ENCODE measurements at regions of chr16 and their contacts with region 1.

Region 1: DNA sequence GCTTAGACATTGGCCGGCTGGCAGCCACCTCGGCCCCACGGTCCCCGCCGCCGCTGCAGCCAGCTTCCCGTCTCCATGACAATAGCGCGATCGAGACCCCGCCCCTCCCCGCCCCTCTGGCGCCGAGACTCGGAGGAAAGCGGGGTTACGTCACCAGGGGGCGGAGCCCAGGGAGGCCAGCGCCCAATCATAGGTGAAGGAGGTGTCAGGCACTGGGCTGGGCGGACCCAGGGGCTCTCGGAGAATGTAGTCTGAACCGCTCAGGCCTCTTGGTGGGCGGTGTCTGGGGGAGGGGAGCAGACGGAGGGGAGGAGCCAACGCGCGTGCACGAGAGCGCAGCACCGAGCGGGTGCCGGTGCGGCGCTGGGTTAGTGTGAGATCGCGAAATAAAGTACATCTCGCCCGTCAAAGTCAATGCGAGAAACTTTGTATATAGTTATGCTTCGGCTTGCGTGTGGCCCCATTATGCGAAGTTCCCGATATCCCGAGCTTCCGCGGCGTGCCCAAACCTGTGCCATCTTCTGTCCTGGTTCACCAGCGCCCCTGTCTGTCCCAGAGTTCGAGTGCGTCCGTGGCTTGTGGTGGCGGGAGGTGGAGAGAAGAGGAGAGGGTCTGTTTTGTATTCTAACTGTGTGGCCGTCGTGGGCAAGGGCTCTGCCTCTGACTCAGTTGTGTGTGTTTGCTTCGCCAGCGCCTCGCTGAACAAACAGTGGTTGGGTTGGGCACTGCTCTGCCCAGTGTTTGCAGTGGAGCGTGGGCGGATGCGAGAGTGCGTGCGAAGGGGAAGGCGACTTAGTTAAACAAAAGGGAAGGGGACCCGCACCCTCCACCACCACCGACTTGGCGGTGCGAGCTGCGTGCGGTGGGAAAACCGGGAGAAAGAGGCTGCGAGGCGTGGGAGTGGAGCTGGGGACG is 1.3 kb upstream of the IRX5 start:
- DNase-seq: peak; percentile 88 to 99 (median 96)

Region 2: DNA sequence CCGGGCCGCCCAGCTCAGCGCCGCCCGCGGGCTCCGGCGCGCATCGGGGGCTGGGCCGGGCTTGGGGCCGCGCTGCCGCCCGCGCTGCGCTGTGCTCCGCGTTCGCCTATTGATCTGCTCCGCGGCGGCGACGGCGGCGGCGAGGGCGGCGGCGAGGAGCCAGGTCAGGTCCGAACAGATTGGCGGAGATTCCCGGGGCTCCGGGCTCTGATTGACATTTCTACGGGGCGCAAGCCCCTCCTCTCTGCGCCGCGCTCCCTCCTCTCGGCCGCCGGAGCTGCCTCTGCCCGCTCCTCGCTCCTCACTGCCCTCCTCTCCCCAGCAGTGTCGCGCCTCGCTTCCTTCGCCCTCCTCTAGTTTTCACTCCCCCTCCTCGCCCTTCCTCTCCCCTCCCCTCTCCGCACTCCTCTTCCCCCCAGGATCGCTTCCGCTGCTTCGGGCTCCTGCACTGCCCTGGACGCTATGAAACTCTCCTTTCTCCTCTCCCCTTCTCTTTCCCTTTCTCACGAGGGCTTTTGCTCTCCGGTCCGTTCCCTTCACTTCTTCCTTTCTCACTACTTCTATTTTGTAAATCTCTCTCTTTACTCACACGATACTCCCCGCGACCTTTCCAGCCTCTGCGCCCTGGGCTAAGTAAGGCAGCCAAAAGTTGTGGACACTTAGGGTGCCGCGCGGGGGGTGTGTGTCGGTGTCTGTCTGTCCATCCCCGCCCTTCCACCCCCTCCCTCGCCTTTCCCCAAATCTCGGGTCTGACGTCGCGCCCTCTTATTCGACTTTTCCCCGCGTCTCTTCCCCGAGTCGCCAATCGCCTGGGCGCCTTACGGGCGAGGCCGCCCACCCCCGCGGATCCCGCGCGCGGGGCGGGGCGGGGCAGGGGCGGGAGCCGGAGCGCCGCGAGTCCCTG is 643.0 kb before region 1 on chr16 and contains the start of gene IRX3:
- intact Hi-C with region 1: loop called (anchors 10 kb)
- DNase-seq: peak in 1 of 10 donors; percentile 49

Measured in posterior cingulate gyrus (tissue), 11 donors.